A673 (cell line): ENCODE measurements at regions of chr12 and their contacts with region 1.

Region 1: DNA sequence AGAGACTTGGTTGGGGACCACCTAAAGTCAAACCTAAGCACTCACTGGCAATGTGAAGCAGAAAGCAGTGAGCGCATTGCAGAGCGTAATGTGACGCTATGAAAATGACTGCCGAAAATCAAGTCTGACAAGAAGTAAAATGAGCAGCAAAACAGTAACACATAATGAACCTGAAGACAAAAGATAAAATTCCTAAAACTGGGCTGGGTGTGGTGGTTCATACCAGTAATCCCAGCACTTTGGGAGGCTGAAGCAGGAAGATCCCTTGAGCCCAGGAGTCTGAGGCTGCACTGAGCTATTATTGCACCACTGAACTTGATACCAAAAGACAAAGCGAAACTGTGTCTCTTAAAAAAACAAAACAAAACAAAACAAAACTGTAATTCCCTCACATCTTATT is 16.4 kb downstream of the CORO1C start:
- DNase-seq: no peak
- H3K4me3 ChIP-seq: no peak overlapping the region
- H3K27ac ChIP-seq: no peak overlapping the region
- H3K4me1 ChIP-seq: peaks cover 50% of the 10 kb centered on the region
- H3K27me3 ChIP-seq: no peaks in the 10 kb centered on the region
- CTCF ChIP-seq: no peak

Region 2: GRCh38 chr12:108640802-108641445 is 74.0 kb before region 1 on chr12:
- CTCF ChIA-PET with region 1: no interaction called
- POLR2A ChIA-PET with region 1: no interaction called
- intact Hi-C with region 1: no loop called
- DNase-seq: no peak
- H3K4me3 ChIP-seq: no peak overlapping the region
- H3K27ac ChIP-seq: no peak overlapping the region
- H3K4me1 ChIP-seq: no peaks in the 10 kb centered on the region
- H3K27me3 ChIP-seq: no peaks in the 10 kb centered on the region
- CTCF ChIP-seq: no peak

Region 3: DNA sequence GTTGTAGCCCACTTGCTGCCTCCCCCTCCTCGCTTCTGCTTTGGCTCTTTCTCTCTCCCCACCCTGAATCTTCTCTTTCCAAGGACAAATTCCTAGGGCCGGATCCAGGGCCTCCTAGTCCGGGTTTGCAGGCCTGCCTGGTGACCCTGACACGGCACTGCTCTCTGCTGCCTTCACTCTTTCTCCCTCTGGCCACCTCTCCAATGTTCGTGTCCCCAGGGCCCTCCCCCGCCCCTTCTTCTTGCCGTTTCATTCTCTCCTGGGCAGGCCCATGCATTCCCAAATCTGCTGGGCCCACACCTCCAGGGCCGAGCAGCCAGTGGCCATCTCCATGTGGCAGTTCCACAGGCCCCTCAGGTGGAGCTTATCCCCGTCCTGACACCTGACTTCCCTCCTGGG is 50.4 kb after region 1 on chr12:
- CTCF ChIA-PET with region 1: no interaction called
- POLR2A ChIA-PET with region 1: interaction called, 10 read pairs
- intact Hi-C with region 1: no loop called
- DNase-seq: no peak
- H3K4me3 ChIP-seq: no peak overlapping the region
- H3K27ac ChIP-seq: no peak overlapping the region
- H3K4me1 ChIP-seq: peaks cover 4% of the 10 kb centered on the region
- H3K27me3 ChIP-seq: no peaks in the 10 kb centered on the region
- CTCF ChIP-seq: no peak